CD4-positive, alpha-beta T cell (primary cell): ENCODE measurements at regions of chr12 and their contacts with region 1.

Region 1: GRCh38 chr12:123580772-123581171 is 3.6 kb upstream of the TMED2 start:
- DNase-seq: no peak
- ATAC-seq: no peak
- H3K4me3 ChIP-seq: no peak overlapping the region
- H3K4me3 Mint-ChIP-seq: peak overlapping the region; percentile 20
- H3K27ac ChIP-seq: no peak overlapping the region
- H3K27ac Mint-ChIP-seq: no peak overlapping the region
- H3K4me1 ChIP-seq: peaks cover 28% of the 10 kb centered on the region
- H3K4me1 Mint-ChIP-seq: peaks cover 26% of the 10 kb centered on the region
- H3K27me3 ChIP-seq: no peaks in the 10 kb centered on the region
- H3K27me3 Mint-ChIP-seq: no peaks in the 10 kb centered on the region
- CTCF ChIP-seq: no peak

Region 2: GRCh38 chr12:123150744-123151456 is 429.9 kb before region 1 on chr12 and contains the start of gene PITPNM2:
- CTCF ChIA-PET with region 1: no interaction called
- POLR2A ChIA-PET with region 1: no interaction called
- intact Hi-C with region 1: no loop called
- DNase-seq: peak; percentile 28 to 87 (median 60)
- ATAC-seq: peak; percentile 86
- H3K4me3 ChIP-seq: peak within 1 kb of the TSS; percentile 76
- H3K4me3 Mint-ChIP-seq: peak within 1 kb of the TSS; percentile 93
- H3K27ac ChIP-seq: peak within 1 kb of the TSS; percentile 22 to 40
- H3K27ac Mint-ChIP-seq: peak within 1 kb of the TSS; percentile 89
- H3K4me1 ChIP-seq: peaks cover 27% of the 10 kb centered on the region
- H3K4me1 Mint-ChIP-seq: peaks cover 52% of the 10 kb centered on the region
- H3K27me3 ChIP-seq: no peaks in the 10 kb centered on the region
- H3K27me3 Mint-ChIP-seq: no peaks in the 10 kb centered on the region
- CTCF ChIP-seq: no peak
- total RNA-seq, gene PITPNM2: 37.3 to 38.3 TPM

Region 3: DNA sequence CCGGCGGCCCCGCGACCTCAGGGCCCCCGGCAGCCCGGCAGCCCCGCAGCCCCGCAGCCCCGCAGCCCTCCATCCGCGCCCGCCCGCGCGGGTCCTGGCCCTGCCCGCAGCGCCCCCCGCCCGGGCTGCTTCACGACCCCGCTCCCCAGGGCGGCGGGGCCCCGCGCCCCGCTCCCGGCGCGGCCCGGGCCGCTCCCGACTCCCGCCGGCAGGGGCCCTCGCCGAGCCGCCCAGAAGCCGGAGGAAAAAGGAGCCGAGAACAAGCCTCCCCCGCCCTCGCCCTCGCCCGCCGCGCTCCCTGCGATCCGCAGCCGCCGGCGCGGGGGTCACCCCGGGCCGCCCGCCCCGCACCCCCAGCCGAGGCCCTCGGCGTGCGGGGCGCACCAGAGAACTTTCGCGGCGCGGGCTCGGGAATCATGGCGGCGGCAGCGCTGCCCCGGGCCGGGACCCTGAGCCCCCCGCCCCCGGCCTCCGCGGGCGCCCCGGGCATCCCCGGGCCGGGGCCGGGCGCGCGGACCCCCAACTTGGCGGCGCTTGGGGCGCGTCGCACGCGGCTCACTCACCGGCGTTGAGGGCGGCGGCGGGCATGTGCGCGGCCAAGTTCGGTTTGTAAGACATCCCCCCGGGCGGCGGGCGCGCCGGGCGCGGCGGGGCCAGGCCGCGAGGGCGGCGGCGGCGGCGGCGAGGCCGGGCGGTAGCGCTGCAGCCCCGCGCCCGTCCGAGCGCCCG is 309.6 kb before region 1 on chr12:
- CTCF ChIA-PET with region 1: no interaction called
- POLR2A ChIA-PET with region 1: no interaction called
- intact Hi-C with region 1: loop called in 1 of 2 experiments (anchors 1 kb)
- DNase-seq: peak; percentile 60 to 87 (median 72)
- ATAC-seq: peak; percentile 88
- H3K4me3 ChIP-seq: peak overlapping the region; percentile 41
- H3K4me3 Mint-ChIP-seq: no peak overlapping the region
- H3K27ac ChIP-seq: no peak overlapping the region
- H3K27ac Mint-ChIP-seq: no peak overlapping the region
- H3K4me1 ChIP-seq: peaks cover 38% of the 10 kb centered on the region
- H3K4me1 Mint-ChIP-seq: peaks cover 32% of the 10 kb centered on the region
- H3K27me3 ChIP-seq: no peaks in the 10 kb centered on the region
- H3K27me3 Mint-ChIP-seq: no peaks in the 10 kb centered on the region
- CTCF ChIP-seq: peak; percentile 10

Region 4: GRCh38 chr12:123388177-123388947 is 192.4 kb before region 1 on chr12:
- CTCF ChIA-PET with region 1: no interaction called
- POLR2A ChIA-PET with region 1: interaction called, 3 read pairs
- intact Hi-C with region 1: loop called (anchors 2 to 5 kb)
- DNase-seq: peak; percentile 34 to 88 (median 67)
- ATAC-seq: peak; percentile 61
- H3K4me3 ChIP-seq: peak overlapping the region; percentile 87
- H3K4me3 Mint-ChIP-seq: peak overlapping the region; percentile 91
- H3K27ac ChIP-seq: peak overlapping the region; percentile 53 to 76
- H3K27ac Mint-ChIP-seq: peak overlapping the region; percentile 73
- H3K4me1 ChIP-seq: peaks cover 58% of the 10 kb centered on the region
- H3K4me1 Mint-ChIP-seq: peaks cover 52% of the 10 kb centered on the region
- H3K27me3 ChIP-seq: no peaks in the 10 kb centered on the region
- H3K27me3 Mint-ChIP-seq: no peaks in the 10 kb centered on the region
- CTCF ChIP-seq: no peak

Region 5: DNA sequence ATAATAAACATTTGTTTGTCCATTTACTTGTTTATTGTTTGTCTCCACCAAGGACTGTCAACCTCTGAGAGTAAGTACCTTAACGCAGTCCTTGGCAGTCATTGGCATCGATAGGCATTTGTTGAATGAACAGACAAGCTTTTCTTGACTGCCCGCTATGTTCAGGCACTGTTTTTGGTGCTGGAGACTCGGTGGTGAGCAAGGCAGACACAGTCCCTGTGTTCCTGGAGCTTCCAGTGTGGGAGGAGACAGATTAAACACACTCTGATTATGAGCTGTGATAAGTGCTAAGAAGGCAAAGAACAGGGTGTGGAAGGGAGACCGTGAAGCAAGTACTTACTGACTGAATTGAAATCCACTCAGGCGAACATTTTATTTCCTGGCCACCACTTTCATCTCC is 132.6 kb after region 1 on chr12:
- CTCF ChIA-PET with region 1: no interaction called
- POLR2A ChIA-PET with region 1: interaction called, 3 read pairs
- intact Hi-C with region 1: loop called in 1 of 2 experiments (anchors 5 kb)
- DNase-seq: peak in 1 of 14 experiments; percentile 17
- ATAC-seq: no peak
- H3K4me3 ChIP-seq: peak overlapping the region; percentile 87
- H3K4me3 Mint-ChIP-seq: peak overlapping the region; percentile 85
- H3K27ac ChIP-seq: no peak overlapping the region
- H3K27ac Mint-ChIP-seq: peak overlapping the region; percentile 62
- H3K4me1 ChIP-seq: peaks cover 27% of the 10 kb centered on the region
- H3K4me1 Mint-ChIP-seq: peaks cover 38% of the 10 kb centered on the region
- H3K27me3 ChIP-seq: no peaks in the 10 kb centered on the region
- H3K27me3 Mint-ChIP-seq: no peaks in the 10 kb centered on the region
- CTCF ChIP-seq: no peak

Region 6: GRCh38 chr12:125381373-125381772 is 1800.6 kb after region 1 on chr12:
- CTCF ChIA-PET with region 1: no interaction called
- POLR2A ChIA-PET with region 1: no interaction called
- intact Hi-C with region 1: no loop called
- DNase-seq: no peak
- ATAC-seq: no peak
- H3K4me3 ChIP-seq: no peak overlapping the region
- H3K4me3 Mint-ChIP-seq: no peak overlapping the region
- H3K27ac ChIP-seq: no peak overlapping the region
- H3K27ac Mint-ChIP-seq: no peak overlapping the region
- H3K4me1 ChIP-seq: no peaks in the 10 kb centered on the region
- H3K4me1 Mint-ChIP-seq: no peaks in the 10 kb centered on the region
- H3K27me3 ChIP-seq: peaks cover 7 to 8% of the 10 kb centered on the region in 2 experiments
- H3K27me3 Mint-ChIP-seq: peaks cover 15% of the 10 kb centered on the region
- CTCF ChIP-seq: no peak